ENCODE measurements at regions of chr2 and their contacts with region 1.

Region 1: DNA sequence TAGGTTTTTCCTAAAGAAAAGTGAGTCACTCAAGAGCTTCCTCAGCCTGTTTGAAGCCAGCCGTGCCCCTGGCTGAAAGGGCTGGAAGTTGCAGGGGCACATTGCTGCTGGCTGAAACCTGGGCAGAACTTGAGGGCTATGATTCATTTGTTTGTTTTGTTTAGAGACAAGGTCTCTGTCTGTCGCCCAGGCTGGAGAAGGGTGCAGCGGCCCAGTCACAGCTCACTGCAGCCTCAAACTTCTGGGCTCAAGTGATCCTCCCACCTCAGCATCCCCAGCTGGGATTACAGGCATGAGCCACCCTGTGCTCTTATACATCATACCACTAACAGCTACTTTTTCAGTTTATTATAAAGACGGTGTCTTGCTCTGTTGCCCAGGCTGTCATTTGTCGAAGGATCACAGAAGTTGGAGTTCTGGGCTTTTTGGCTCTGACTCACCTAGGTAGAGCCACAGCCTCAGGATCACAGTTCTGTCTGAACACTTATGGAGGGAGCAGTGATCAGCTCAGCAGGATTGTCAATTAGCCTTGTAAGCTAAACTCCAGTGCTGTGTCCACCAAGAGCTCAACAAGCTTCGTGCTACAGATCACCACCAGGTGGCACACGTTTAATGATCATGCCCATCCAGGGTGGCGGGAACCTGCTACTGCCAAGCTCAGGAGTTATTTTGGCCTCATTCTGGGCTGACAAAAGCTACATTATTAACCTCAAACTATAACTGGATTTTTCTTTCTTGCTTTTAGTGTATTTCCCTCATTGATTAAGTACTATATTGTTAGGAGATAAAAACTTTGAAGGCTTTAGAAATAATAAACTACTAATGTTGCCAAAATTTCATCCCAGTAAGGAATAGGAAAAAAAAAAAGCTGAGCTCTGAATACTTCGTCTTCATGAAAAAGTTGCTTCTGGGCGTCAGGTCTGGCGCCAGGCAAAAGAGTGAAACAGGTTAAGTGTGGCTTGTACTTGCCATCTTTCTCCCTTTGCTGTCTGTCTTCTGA is 57.9 kb downstream of the ARHGEF33 start:
- DNase-seq: peak; percentile 40 to 73 (median 58)
- ATAC-seq: peak; percentile 86
- H3K4me3 ChIP-seq: no peak overlapping the region
- H3K27ac ChIP-seq: no peak overlapping the region
- H3K4me1 ChIP-seq: peaks cover 3 to 10% of the 10 kb centered on the region in 2 experiments; a peak in 3 of 5 replicates
- H3K27me3 ChIP-seq: no peaks in the 10 kb centered on the region
- CTCF ChIP-seq: peak; percentile 62 to 67 (median 65)
- EP300 ChIP-seq: no peak
- POLR2A ChIP-seq: no peak
- RAD21 ChIP-seq: peak; percentile 41 to 76

Region 2: GRCh38 chr2:39050109-39050508 is 102.6 kb after region 1 on chr2:
- CTCF ChIA-PET with region 1: no interaction called
- POLR2A ChIA-PET with region 1: no interaction called
- in situ Hi-C with region 1: no loop called
- intact Hi-C with region 1: loop called (anchors 5 kb)
- DNase-seq: no peak
- ATAC-seq: no peak
- H3K4me3 ChIP-seq: no peak overlapping the region
- H3K27ac ChIP-seq: no peak overlapping the region
- H3K4me1 ChIP-seq: no peaks in the 10 kb centered on the region
- H3K27me3 ChIP-seq: no peaks in the 10 kb centered on the region
- CTCF ChIP-seq: no peak
- EP300 ChIP-seq: no peak
- POLR2A ChIP-seq: no peak
- RAD21 ChIP-seq: no peak

Region 3: GRCh38 chr2:39568561-39569006 is 621.0 kb after region 1 on chr2:
- CTCF ChIA-PET with region 1: no interaction called
- POLR2A ChIA-PET with region 1: no interaction called
- in situ Hi-C with region 1: no loop called
- intact Hi-C with region 1: no loop called
- DNase-seq: no peak
- ATAC-seq: no peak
- H3K4me3 ChIP-seq: no peak overlapping the region
- H3K27ac ChIP-seq: no peak overlapping the region
- H3K4me1 ChIP-seq: no peaks in the 10 kb centered on the region
- H3K27me3 ChIP-seq: no peaks in the 10 kb centered on the region; a peak in 1 of 5 replicates
- CTCF ChIP-seq: no peak
- EP300 ChIP-seq: no peak
- POLR2A ChIP-seq: no peak
- RAD21 ChIP-seq: no peak

Measured in K562 (cell line).